HepG2 (cell line): ENCODE measurements at regions of chr14 and their contacts with region 1.

Region 1: GRCh38 chr14:23600322-23600707 is 21.7 kb upstream of the JPH4 start:
- DNase-seq: no peak
- ATAC-seq: no peak; the same call in 2 of the 3 replicates
- H3K4me3 ChIP-seq: peak overlapping the region in 1 of 3 experiments; percentile 1; a peak in 1 of 6 replicates
- H3K27ac ChIP-seq: peak overlapping the region; percentile 57
- H3K4me1 ChIP-seq: peaks cover 49% of the 10 kb centered on the region
- H3K27me3 ChIP-seq: no peaks in the 10 kb centered on the region
- CTCF ChIP-seq: no peak
- EP300 ChIP-seq: no peak
- POLR2A ChIP-seq: no peak
- RAD21 ChIP-seq: no peak

Region 2: DNA sequence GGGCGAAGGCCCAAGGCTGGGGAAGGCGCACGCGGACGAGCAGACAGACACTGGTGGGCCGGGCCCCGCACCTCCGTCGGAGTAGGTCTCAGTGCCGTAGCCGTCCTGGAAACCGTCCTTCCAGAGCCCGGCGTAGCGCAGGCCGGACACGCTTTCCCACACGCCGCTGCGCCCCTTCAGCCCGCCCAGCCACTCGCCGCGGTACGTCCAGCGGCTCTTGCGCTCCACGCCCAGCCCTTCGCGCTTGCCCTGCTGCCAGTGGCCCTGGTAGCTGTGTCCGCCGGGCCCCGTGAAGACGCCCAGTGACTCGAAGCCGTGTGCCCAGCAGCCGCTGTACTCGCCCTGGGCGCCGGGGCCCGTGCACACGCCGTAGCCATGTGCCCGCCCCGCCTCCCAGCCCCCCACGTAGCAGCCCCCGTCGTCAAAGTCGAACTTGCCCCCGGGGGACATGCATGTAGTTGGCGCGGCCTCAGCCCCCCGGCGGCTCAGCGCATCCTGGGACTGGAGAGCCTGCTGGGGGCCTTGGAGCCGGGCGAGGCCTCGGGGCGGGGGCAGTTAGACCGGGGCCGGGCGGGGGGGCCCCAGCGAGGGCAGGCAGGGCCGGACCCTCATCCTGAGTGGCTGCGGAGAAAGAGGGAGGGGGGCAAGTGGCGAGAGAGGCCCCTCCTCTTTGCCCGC is 23.2 kb before region 1 on chr14:
- CTCF ChIA-PET with region 1: no interaction called
- POLR2A ChIA-PET with region 1: interaction called, 10 read pairs
- in situ Hi-C with region 1: no loop called
- intact Hi-C with region 1: no loop called
- DNase-seq: no peak
- ATAC-seq: no peak
- H3K4me3 ChIP-seq: no peak overlapping the region; a peak in 1 of 6 replicates
- H3K27ac ChIP-seq: no peak overlapping the region
- H3K4me1 ChIP-seq: peaks cover 45% of the 10 kb centered on the region
- H3K27me3 ChIP-seq: peaks cover 0 to 2% of the 10 kb centered on the region in 2 experiments; a peak in 2 of 5 replicates
- CTCF ChIP-seq: no peak
- EP300 ChIP-seq: no peak
- POLR2A ChIP-seq: no peak
- RAD21 ChIP-seq: no peak